IMR-90 (cell line): ENCODE measurements at regions of chr5 and their contacts with region 1.

Region 1: GRCh38 chr5:159209438-159210305 is at the start of gene RNF145:
- DNase-seq: peak; percentile 86
- ATAC-seq: peak; percentile 74
- H3K4me3 ChIP-seq: peak within 1 kb of the TSS; percentile 83
- H3K27ac ChIP-seq: peak within 1 kb of the TSS; percentile 100
- H3K4me1 ChIP-seq: 0 out of 2 replicates have a peak, but pooled peaks cover 2% of the 10 kb centered on the region
- H3K27me3 ChIP-seq: no peaks in the 10 kb centered on the region
- CTCF ChIP-seq: no peak
- POLR2A ChIP-seq: peak; percentile 61; the same call in 1 of the 2 replicates
- RAD21 ChIP-seq: 0 out of 2 replicates have a peak, but pooled peaks have one; percentile 4
- total RNA-seq, gene RNF145: 50.0 and 68.0 TPM in 2 replicates

Region 2: GRCh38 chr5:159184858-159185381 is 24.8 kb before region 1 on chr5:
- CTCF ChIA-PET with region 1: no interaction called
- POLR2A ChIA-PET with region 1: no interaction called
- dilution Hi-C with region 1: no loop called
- in situ Hi-C with region 1: no loop called
- intact Hi-C with region 1: loop called (anchors 2 kb)
- DNase-seq: peak; percentile 93
- ATAC-seq: peak; percentile 65
- H3K4me3 ChIP-seq: no peak overlapping the region
- H3K27ac ChIP-seq: peak overlapping the region; percentile 69
- H3K4me1 ChIP-seq: peaks cover 33% of the 10 kb centered on the region
- H3K27me3 ChIP-seq: no peaks in the 10 kb centered on the region
- CTCF ChIP-seq: no peak
- POLR2A ChIP-seq: no peak
- RAD21 ChIP-seq: no peak

Region 3: DNA sequence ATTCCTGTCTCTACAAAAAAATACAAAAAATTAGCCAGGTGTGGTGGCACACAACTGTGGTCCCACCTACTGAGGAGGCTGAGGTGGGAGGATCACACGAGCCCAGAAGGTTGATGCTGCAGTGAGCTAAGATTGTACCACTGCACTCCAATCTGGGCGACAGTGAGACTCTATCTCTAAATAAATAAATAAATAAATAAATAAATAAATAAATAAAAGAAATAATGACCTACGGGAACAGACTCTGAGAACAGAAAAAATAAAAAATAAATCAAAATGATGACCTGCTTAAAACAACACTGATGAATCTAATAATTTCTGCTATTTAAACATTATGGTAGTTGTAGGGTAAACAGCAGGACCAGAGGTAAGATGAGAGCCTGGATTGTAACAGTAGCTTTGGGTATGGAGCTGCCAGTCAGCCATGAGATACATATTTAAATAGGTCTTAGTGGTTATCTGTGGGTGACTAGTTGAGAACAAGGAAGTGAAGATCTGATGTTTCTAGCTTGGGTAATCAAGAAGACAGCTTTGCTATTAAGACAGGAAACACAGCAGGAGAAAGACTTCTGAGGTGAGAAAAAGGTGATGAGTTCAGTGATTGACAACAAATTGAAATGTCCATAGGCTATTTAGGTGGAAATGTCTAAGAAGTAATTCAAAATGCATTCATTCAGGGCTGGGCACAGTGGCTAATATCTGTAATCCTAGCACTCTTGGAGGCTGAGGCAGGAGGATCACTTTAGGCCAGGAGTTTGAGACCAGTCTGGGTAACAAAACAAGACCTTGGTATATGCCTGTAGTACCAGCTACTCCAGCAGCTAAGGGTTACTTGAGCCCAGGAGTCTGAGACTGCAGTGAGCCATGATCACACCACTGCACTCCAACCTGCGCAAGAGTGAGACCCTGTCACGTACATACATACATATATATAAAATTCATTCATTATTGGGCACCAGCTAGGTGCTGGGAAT is 11.3 kb before region 1 on chr5:
- CTCF ChIA-PET with region 1: interaction called, 10 read pairs
- POLR2A ChIA-PET with region 1: interaction called, 3 read pairs
- dilution Hi-C with region 1: no loop called
- in situ Hi-C with region 1: no loop called
- intact Hi-C with region 1: no loop called
- DNase-seq: no peak
- ATAC-seq: 0 out of 2 replicates have a peak, but pooled peaks have one; percentile 21
- H3K4me3 ChIP-seq: no peak overlapping the region
- H3K27ac ChIP-seq: peak overlapping the region; percentile 9; the same call in 1 of the 2 replicates
- H3K4me1 ChIP-seq: peaks cover 7% of the 10 kb centered on the region
- H3K27me3 ChIP-seq: no peaks in the 10 kb centered on the region
- CTCF ChIP-seq: no peak
- POLR2A ChIP-seq: no peak
- RAD21 ChIP-seq: no peak

Region 4: GRCh38 chr5:159262859-159263567 is 53.3 kb after region 1 on chr5 and contains the start of gene UBLCP1:
- CTCF ChIA-PET with region 1: no interaction called
- POLR2A ChIA-PET with region 1: no interaction called
- dilution Hi-C with region 1: no loop called
- in situ Hi-C with region 1: no loop called
- intact Hi-C with region 1: loop called (anchors 2 kb)
- DNase-seq: peak; percentile 73
- ATAC-seq: peak; percentile 91
- H3K4me3 ChIP-seq: peak within 1 kb of the TSS; percentile 64
- H3K27ac ChIP-seq: peak within 1 kb of the TSS; percentile 93
- H3K4me1 ChIP-seq: peaks cover 3% of the 10 kb centered on the region; the same call in 1 of the 2 replicates
- H3K27me3 ChIP-seq: no peaks in the 10 kb centered on the region
- CTCF ChIP-seq: no peak
- POLR2A ChIP-seq: peak; percentile 68
- RAD21 ChIP-seq: 0 out of 2 replicates have a peak, but pooled peaks have one; percentile 3
- total RNA-seq, gene UBLCP1: 11.7 and 23.1 TPM in 2 replicates

Region 5: DNA sequence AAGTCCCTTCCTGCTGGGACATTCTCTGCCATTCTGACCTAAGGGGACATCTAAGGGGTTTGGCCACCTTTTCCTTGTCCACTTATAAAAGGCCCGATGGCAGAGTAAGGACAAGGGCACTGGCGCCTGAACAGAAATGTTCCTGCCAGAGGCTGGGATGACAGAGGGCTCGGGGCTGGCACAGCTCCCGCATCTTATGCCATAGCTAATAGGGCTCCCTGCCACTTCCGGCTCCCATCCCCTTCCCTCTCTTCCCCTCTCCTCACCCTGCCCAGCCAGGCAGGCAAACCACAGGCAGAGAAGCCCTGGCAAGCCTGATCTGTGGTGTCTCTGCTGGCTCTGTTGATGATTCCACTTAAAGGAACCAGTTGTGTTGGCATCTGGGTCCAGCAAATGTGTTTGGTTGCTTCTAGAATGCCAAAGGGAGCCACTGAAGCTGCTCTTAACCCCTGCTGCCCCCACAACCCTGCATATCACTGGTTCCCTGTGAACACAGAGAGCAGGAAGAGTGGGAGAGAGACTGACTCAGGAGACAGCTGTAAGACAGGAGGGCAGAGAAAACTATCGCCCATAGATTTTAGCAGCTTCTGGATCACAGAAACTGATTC is 688.2 kb after region 1 on chr5:
- CTCF ChIA-PET with region 1: no interaction called
- POLR2A ChIA-PET with region 1: interaction called, 20 read pairs
- dilution Hi-C with region 1: no loop called
- in situ Hi-C with region 1: no loop called
- intact Hi-C with region 1: no loop called
- DNase-seq: no peak
- ATAC-seq: no peak; the same call in 1 of the 2 replicates
- H3K4me3 ChIP-seq: no peak overlapping the region
- H3K27ac ChIP-seq: no peak overlapping the region
- H3K4me1 ChIP-seq: peaks cover 13% of the 10 kb centered on the region
- H3K27me3 ChIP-seq: peaks cover 9% of the 10 kb centered on the region; the same call in 1 of the 2 replicates
- CTCF ChIP-seq: no peak
- POLR2A ChIP-seq: no peak
- RAD21 ChIP-seq: no peak